K562 (cell line): ENCODE measurements at regions of chr6 and their contacts with region 1.

Region 1: GRCh38 chr6:53171605-53172446 is 23.2 kb upstream of the GCM1 start:
- DNase-seq: peak; percentile 83 to 91 (median 88)
- ATAC-seq: peak; percentile 93
- H3K4me3 ChIP-seq: no peak overlapping the region
- H3K27ac ChIP-seq: no peak overlapping the region
- H3K4me1 ChIP-seq: no peaks in the 10 kb centered on the region
- H3K27me3 ChIP-seq: peaks cover 0 to 16% of the 10 kb centered on the region in 2 experiments; a peak in 2 of 5 replicates
- CTCF ChIP-seq: peak; percentile 100
- EP300 ChIP-seq: no peak
- POLR2A ChIP-seq: no peak
- RAD21 ChIP-seq: peak; percentile 100

Region 2: GRCh38 chr6:53294095-53294494 is 122.3 kb after region 1 on chr6:
- CTCF ChIA-PET with region 1: no interaction called
- POLR2A ChIA-PET with region 1: no interaction called
- in situ Hi-C with region 1: no loop called
- intact Hi-C with region 1: loop called (anchors 5 kb)
- DNase-seq: peak in 1 of 4 experiments; percentile 25
- ATAC-seq: peak; percentile 49; the same call in 2 of the 3 replicates
- H3K4me3 ChIP-seq: no peak overlapping the region
- H3K27ac ChIP-seq: no peak overlapping the region
- H3K4me1 ChIP-seq: peaks cover 0 to 31% of the 10 kb centered on the region in 2 experiments; a peak in 3 of 5 replicates
- H3K27me3 ChIP-seq: no peaks in the 10 kb centered on the region
- CTCF ChIP-seq: peak; percentile 47 to 72 (median 56)
- EP300 ChIP-seq: no peak
- POLR2A ChIP-seq: no peak
- RAD21 ChIP-seq: no peak

Region 3: GRCh38 chr6:53375847-53376246 is 204.0 kb after region 1 on chr6:
- CTCF ChIA-PET with region 1: no interaction called
- POLR2A ChIA-PET with region 1: no interaction called
- in situ Hi-C with region 1: no loop called
- intact Hi-C with region 1: no loop called
- DNase-seq: no peak
- ATAC-seq: no peak
- H3K4me3 ChIP-seq: no peak overlapping the region
- H3K27ac ChIP-seq: no peak overlapping the region
- H3K4me1 ChIP-seq: no peaks in the 10 kb centered on the region
- H3K27me3 ChIP-seq: peaks cover 0 to 3% of the 10 kb centered on the region in 2 experiments; a peak in 2 of 5 replicates
- CTCF ChIP-seq: no peak
- EP300 ChIP-seq: no peak
- POLR2A ChIP-seq: no peak
- RAD21 ChIP-seq: no peak

Region 4: DNA sequence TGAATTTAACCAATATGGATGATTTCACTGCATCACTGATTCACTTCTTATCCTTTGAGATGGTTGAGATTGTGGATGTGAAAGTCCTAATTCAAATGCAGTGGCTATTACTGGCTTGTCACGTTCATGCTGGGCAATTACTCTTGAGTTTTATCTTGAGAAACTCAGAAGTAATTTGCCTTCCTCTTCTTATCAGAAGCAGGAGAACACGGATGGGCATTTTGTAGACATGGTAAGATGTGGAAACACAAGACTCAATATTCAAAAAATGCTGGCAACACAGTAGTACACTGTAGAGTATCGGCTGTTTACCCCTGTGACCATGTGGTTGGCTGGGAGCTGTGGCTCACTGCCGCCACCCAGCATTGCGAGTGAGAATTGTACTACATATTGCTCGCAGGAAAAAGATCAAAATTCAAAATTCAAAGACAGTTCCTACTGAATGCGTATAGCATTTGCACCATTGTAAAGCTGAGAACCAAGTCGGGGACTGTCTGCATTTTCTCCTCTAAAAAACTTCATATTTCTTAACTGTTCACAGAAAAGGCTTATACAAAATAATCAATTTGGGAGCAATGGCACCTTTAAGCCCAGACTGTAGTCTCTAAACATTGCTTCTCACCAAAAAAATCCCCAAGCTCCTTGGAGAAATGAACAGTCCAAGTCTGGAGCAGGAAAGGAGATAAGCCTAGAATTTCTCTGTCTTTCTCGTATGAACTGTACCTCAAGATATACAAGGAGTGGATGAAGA is 238.9 kb after region 1 on chr6:
- CTCF ChIA-PET with region 1: interaction called, 9 read pairs
- POLR2A ChIA-PET with region 1: interaction called, 3 read pairs
- in situ Hi-C with region 1: no loop called
- intact Hi-C with region 1: loop called (anchors 1 kb)
- DNase-seq: peak; percentile 23 to 74 (median 52)
- ATAC-seq: peak; percentile 99
- H3K4me3 ChIP-seq: no peak overlapping the region
- H3K27ac ChIP-seq: no peak overlapping the region
- H3K4me1 ChIP-seq: no peaks in the 10 kb centered on the region; a peak in 1 of 5 replicates
- H3K27me3 ChIP-seq: peaks cover 4 to 9% of the 10 kb centered on the region in 2 experiments; a peak in 3 of 5 replicates
- CTCF ChIP-seq: peak; percentile 84 to 88 (median 86)
- EP300 ChIP-seq: peak; percentile 36; the same call in 1 of the 2 replicates
- POLR2A ChIP-seq: no peak
- RAD21 ChIP-seq: peak; percentile 87 to 96

Region 5: DNA sequence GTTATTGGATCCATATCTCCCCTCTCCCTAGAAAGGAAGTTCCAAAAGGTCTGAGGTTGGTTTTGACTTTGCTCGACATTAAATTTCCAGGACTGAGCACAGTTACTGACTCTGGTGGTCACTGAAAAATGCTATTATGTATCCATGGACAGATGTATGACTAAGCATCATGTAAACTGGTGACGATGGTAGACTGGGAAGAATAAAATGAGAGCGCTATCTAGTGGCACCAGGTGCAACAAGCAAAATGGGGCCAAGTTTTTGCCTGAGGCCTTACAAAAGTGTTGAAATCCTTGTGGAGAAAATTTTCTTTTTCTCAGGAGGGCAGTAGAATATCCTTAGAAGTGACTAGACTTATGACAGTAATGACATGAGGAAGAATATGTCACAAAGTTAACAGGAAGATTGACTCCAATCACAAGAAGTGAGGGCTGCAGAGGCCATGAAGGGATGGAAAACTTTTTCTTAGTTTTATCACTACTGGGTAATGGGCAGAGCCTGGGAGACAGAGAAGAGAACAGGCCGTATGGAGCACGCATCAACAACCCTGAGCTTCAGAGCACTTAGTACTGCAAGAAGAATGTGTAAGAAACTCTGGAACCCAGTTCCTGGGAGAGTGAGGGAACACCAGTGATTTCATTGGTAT is 265.9 kb after region 1 on chr6:
- CTCF ChIA-PET with region 1: interaction called, 106 read pairs
- POLR2A ChIA-PET with region 1: no interaction called
- in situ Hi-C with region 1: loop called (anchors 25 kb)
- intact Hi-C with region 1: loop called (anchors 1 kb)
- DNase-seq: peak; percentile 37 to 79 (median 52)
- ATAC-seq: peak; percentile 98
- H3K4me3 ChIP-seq: no peak overlapping the region
- H3K27ac ChIP-seq: no peak overlapping the region
- H3K4me1 ChIP-seq: peaks cover 0 to 4% of the 10 kb centered on the region in 2 experiments; a peak in 1 of 5 replicates
- H3K27me3 ChIP-seq: peaks cover 4 to 10% of the 10 kb centered on the region in 2 experiments; a peak in 2 of 5 replicates
- CTCF ChIP-seq: peak; percentile 85 to 96 (median 88)
- EP300 ChIP-seq: peak; percentile 32; the same call in 1 of the 2 replicates
- POLR2A ChIP-seq: no peak
- RAD21 ChIP-seq: peak; percentile 92 to 96

Region 6: DNA sequence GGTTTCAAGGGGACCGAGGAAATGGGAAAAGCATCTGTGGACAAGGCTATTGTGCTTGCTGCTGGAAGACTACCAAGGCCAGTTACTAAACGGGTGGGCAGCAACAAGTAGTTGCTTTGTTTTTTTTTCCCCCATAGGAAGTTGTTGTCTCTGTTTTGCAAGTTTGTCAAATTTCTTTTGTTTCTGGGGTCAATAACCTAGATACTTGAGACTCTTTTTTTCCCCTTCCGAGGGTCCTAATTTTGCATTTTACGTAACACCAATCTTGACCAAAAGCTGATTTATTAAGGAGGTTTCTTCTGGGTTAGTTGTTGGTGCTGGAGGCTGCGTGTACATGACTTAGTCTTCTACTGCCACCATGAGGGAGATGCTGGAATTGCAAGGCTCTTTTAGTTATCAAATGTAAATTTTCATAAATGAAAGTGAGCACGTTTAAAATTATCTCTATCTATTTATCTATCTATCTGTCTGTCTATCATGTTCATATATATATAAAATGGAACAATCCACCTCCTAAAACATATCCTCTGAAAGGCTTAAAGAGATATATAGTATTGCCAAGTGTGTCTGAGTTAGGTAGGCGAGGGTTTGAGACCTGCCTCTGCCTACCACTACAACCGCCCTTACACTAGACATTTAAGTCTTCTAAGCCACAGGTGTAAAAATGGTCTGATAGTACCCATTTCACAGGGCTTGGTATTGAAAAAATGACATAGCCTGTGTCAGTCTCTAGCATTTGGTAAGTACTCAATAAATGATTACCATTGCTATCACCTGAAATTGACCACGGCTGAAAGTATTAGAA is 312.9 kb after region 1 on chr6:
- CTCF ChIA-PET with region 1: interaction called, 177 read pairs
- POLR2A ChIA-PET with region 1: interaction called, 3 read pairs
- in situ Hi-C with region 1: loop called (anchors 5 kb)
- intact Hi-C with region 1: loop called (anchors 1 kb)
- DNase-seq: peak; percentile 36 to 75 (median 56)
- ATAC-seq: peak; percentile 81
- H3K4me3 ChIP-seq: no peak overlapping the region
- H3K27ac ChIP-seq: no peak overlapping the region
- H3K4me1 ChIP-seq: peaks cover 0 to 15% of the 10 kb centered on the region in 2 experiments; a peak in 2 of 5 replicates
- H3K27me3 ChIP-seq: no peaks in the 10 kb centered on the region; a peak in 1 of 5 replicates
- CTCF ChIP-seq: peak; percentile 84 to 98 (median 85)
- EP300 ChIP-seq: no peak
- POLR2A ChIP-seq: no peak
- RAD21 ChIP-seq: peak; percentile 94 to 98

Region 7: DNA sequence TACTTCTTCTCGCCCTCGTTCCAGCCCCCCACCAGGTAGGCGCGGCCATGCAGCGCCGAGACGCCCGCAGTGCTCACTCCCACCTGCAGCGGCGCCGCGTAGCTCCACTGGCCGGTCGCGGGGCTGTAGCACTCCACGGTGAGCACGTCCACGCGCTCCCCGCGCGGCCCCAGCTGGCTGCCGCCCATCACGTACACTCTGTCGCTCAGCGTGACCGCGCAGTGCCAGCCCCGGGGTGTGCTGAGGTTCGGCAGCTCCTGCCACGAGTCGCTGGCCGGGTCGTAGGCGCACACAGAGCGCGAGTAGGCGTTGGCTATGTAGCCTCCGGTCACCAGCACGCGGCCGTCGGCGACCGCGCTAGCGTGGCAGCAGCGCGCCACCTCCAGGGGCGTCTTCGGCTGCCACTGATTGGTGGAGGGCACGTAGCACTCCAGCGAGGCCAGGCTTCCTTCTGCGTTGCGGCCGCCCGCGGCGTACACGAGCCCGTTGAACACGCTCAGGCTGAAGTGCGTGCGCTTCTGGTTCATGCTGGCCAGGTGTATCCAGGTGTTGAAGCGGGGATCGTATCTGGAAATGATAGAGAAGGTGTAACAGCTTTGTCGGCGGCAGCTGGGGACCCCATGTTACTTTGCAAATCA is 480.1 kb after region 1 on chr6:
- CTCF ChIA-PET with region 1: interaction called, 18 read pairs
- POLR2A ChIA-PET with region 1: no interaction called
- in situ Hi-C with region 1: no loop called
- intact Hi-C with region 1: no loop called
- DNase-seq: no peak
- ATAC-seq: peak; percentile 69
- H3K4me3 ChIP-seq: no peak overlapping the region
- H3K27ac ChIP-seq: no peak overlapping the region
- H3K4me1 ChIP-seq: peaks cover 0 to 8% of the 10 kb centered on the region in 2 experiments; a peak in 3 of 5 replicates
- H3K27me3 ChIP-seq: peaks cover 3 to 18% of the 10 kb centered on the region in 2 experiments; a peak in 3 of 5 replicates
- CTCF ChIP-seq: no peak
- EP300 ChIP-seq: no peak
- POLR2A ChIP-seq: no peak
- RAD21 ChIP-seq: no peak

Region 8: GRCh38 chr6:53725791-53726431 is 554.1 kb after region 1 on chr6:
- CTCF ChIA-PET with region 1: interaction called, 17 read pairs
- POLR2A ChIA-PET with region 1: no interaction called
- in situ Hi-C with region 1: no loop called
- intact Hi-C with region 1: loop called (anchors 5 kb)
- DNase-seq: peak; percentile 79 to 83 (median 81)
- ATAC-seq: peak; percentile 97
- H3K4me3 ChIP-seq: no peak overlapping the region
- H3K27ac ChIP-seq: no peak overlapping the region
- H3K4me1 ChIP-seq: no peaks in the 10 kb centered on the region
- H3K27me3 ChIP-seq: no peaks in the 10 kb centered on the region
- CTCF ChIP-seq: peak; percentile 87 to 95 (median 91)
- EP300 ChIP-seq: no peak
- POLR2A ChIP-seq: no peak
- RAD21 ChIP-seq: peak; percentile 75 to 76